Mammary epithelial cell (primary cell): ENCODE measurements at regions of chr17 and their contacts with region 1.

Region 1: GRCh38 chr17:40219073-40219860 is at the start of gene WIPF2:
- DNase-seq: peak; percentile 94
- H3K4me3 ChIP-seq: peak within 1 kb of the TSS; percentile 68 to 79 (median 73)
- H3K27ac ChIP-seq: peak within 1 kb of the TSS; percentile 82
- H3K4me1 ChIP-seq: no peaks in the 10 kb centered on the region
- H3K27me3 ChIP-seq: no peaks in the 10 kb centered on the region
- CTCF ChIP-seq: peak; percentile 37 to 82
- total RNA-seq, gene WIPF2: 8.8 to 33.2 TPM

Region 2: DNA sequence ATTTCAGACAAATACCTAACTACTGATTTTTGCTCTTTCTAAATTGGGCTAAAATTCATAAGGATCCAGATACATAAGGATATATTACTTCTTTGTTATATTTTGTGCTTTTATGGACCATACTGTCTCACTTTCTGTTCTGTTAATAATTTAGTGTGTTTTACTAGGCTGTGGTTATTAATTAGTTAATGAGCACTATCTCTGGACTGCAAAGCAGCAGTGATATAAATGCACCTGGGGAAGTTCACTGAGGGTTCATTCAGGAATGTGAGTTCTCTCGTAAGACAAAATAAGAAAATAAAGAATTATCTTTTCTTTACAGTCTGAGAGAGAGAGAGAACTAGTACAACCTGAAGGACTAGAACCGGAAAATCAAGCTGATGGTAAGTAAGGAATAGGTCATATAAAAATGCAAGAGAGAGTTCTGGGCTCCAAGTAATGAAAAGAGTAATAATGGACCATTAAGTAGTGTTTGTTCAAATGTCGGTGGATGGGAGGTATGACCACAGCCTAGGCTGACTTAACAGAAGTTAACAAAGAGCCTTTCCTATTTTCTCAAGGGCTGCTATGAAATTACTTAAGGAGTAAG is 410.8 kb before region 1 on chr17:
- CTCF ChIA-PET with region 1: interaction called, 16 read pairs
- dilution Hi-C with region 1: no loop called
- in situ Hi-C with region 1: no loop called
- intact Hi-C with region 1: no loop called
- DNase-seq: no peak
- H3K4me3 ChIP-seq: no peak overlapping the region
- H3K27ac ChIP-seq: no peak overlapping the region
- H3K4me1 ChIP-seq: no peaks in the 10 kb centered on the region
- H3K27me3 ChIP-seq: peaks cover 3% of the 10 kb centered on the region
- CTCF ChIP-seq: no peak

Region 3: GRCh38 chr17:40157973-40158372 is 61.3 kb before region 1 on chr17:
- CTCF ChIA-PET with region 1: no interaction called
- dilution Hi-C with region 1: no loop called
- in situ Hi-C with region 1: no loop called
- intact Hi-C with region 1: no loop called
- DNase-seq: no peak
- H3K4me3 ChIP-seq: no peak overlapping the region
- H3K27ac ChIP-seq: no peak overlapping the region
- H3K4me1 ChIP-seq: no peaks in the 10 kb centered on the region
- H3K27me3 ChIP-seq: no peaks in the 10 kb centered on the region
- CTCF ChIP-seq: no peak

Region 4: GRCh38 chr17:40203131-40203530 is 16.1 kb before region 1 on chr17:
- CTCF ChIA-PET with region 1: no interaction called
- dilution Hi-C with region 1: no loop called
- in situ Hi-C with region 1: no loop called
- intact Hi-C with region 1: loop called (anchors 1 kb)
- DNase-seq: no peak
- H3K4me3 ChIP-seq: no peak overlapping the region
- H3K27ac ChIP-seq: no peak overlapping the region
- H3K4me1 ChIP-seq: no peaks in the 10 kb centered on the region
- H3K27me3 ChIP-seq: no peaks in the 10 kb centered on the region
- CTCF ChIP-seq: no peak

Region 5: GRCh38 chr17:40298726-40299125 is 79.5 kb after region 1 on chr17:
- CTCF ChIA-PET with region 1: no interaction called
- dilution Hi-C with region 1: no loop called
- in situ Hi-C with region 1: no loop called
- intact Hi-C with region 1: no loop called
- DNase-seq: no peak
- H3K4me3 ChIP-seq: no peak overlapping the region
- H3K27ac ChIP-seq: no peak overlapping the region
- H3K4me1 ChIP-seq: peaks cover 12% of the 10 kb centered on the region
- H3K27me3 ChIP-seq: no peaks in the 10 kb centered on the region
- CTCF ChIP-seq: no peak

Region 6: DNA sequence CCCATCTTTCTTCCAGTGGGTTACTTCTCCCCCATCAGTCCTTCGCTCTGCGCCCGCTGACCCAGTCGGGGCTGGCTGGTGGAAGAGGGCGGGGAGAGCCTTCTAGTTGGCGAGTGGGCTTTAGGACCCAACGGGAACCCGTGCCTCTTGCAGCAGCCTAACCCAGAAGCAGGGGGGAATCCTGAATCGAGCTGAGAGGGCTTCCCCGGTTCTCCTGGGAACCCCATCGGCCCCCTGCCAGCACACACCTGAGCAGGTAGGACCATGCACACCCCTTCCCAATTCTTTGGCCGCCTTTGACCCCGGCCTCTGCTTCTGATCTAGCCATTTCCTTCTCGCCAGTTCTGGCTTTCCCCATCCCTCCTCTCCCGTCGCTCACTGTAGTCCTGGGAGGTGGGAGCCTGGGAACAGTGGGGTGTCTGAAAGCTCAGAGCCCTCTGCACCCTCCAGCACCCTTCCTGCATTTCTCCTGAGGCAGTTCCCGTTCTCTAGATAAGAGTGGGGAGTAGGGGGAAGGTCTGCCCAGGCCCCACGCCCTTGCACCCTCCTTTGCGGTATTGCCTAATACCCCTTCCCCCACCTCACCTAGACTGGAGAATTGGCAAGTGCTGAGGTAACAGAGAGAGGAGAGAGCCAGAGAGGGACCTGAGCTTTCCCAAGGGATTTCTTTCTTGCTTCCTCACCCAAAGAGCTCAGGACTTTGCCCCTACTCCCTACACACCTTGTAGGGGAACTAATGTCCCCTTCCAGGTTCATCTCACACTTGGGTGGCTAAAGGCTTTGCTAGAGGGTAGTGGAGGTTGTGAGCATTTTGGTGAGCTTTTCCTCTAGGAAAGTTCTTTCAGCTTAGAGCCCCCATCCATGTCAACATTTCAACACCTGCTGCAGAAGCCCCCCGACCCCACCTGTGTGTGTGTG is 90.0 kb after region 1 on chr17 and contains the start of gene RARA:
- CTCF ChIA-PET with region 1: no interaction called
- dilution Hi-C with region 1: no loop called
- in situ Hi-C with region 1: no loop called
- intact Hi-C with region 1: no loop called
- DNase-seq: no peak
- H3K4me3 ChIP-seq: peak within 1 kb of the TSS in 2 of 3 experiments; percentile 9 to 39
- H3K27ac ChIP-seq: no peak within 1 kb of the TSS
- H3K4me1 ChIP-seq: peaks cover 65% of the 10 kb centered on the region
- H3K27me3 ChIP-seq: no peaks in the 10 kb centered on the region
- CTCF ChIP-seq: no peak
- total RNA-seq, gene RARA: 12.7 to 26.6 TPM